Common myeloid progenitor, CD34-positive (primary cell): ENCODE measurements at regions of chr1 and their contacts with region 1.

Region 1: GRCh38 chr1:204989266-204990058 is 53.5 kb upstream of the CNTN2 start:
- DNase-seq: peak; percentile 80 to 90 (median 87)
- H3K4me3 ChIP-seq: no peak overlapping the region
- H3K27ac ChIP-seq: no peak overlapping the region
- H3K4me1 ChIP-seq: peaks cover 11 to 46% (median 35%) of the 10 kb centered on the region in 4 experiments
- H3K27me3 ChIP-seq: no peaks in the 10 kb centered on the region

Region 2: DNA sequence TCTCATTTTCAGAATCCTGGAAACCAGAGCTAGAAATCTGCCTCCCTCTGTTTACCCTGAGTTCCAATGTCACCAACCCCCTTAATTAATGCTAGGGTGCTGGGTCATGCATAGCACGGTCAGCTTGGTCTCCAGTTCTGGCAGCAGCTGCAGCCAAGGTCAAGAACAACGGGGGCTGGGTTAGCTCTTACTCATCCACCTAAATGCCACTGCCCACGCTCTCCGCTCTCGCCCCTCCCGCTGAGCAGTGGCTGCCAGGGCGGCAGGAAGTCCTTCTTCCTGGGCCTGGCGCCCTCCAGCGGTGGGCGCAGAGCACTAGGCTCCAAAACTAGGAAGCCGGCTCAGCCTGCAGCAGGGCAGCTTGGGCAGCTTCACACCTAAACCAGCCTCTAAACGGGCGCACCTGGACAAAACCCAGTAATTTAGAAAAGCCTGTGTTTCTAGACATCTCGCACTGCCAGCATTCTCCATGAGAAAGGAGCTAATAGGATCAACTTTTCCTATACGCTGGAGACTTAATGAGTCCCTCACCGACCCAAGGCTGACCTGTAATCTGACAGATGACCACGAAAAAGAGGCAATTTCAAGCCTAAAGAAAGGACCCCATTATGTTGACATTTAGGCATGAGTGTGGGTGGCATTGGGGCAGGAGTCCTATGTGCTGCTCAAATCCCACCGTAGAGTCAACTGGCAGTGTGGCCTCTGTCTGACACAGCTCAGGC is 225.6 kb before region 1 on chr1:
- CTCF ChIA-PET with region 1: no interaction called
- POLR2A ChIA-PET with region 1: no interaction called
- DNase-seq: peak; percentile 69 to 84 (median 83)
- H3K4me3 ChIP-seq: peak overlapping the region in 2 of 7 experiments; percentile 12 to 48
- H3K27ac ChIP-seq: no peak overlapping the region
- H3K4me1 ChIP-seq: peaks cover 0 to 10% (median 5%) of the 10 kb centered on the region in 4 experiments
- H3K27me3 ChIP-seq: peaks cover 0 to 23% (median 2%) of the 10 kb centered on the region in 5 experiments

Region 3: GRCh38 chr1:204975570-204976235 is 13.8 kb before region 1 on chr1:
- CTCF ChIA-PET with region 1: interaction called, 142 read pairs
- POLR2A ChIA-PET with region 1: no interaction called
- DNase-seq: peak; percentile 43 to 67 (median 53)
- H3K4me3 ChIP-seq: no peak overlapping the region
- H3K27ac ChIP-seq: no peak overlapping the region
- H3K4me1 ChIP-seq: peaks cover 6 to 49% (median 35%) of the 10 kb centered on the region in 4 experiments
- H3K27me3 ChIP-seq: no peaks in the 10 kb centered on the region

Region 4: GRCh38 chr1:205054013-205054412 is 64.6 kb after region 1 on chr1:
- CTCF ChIA-PET with region 1: interaction called, 17 read pairs
- POLR2A ChIA-PET with region 1: no interaction called
- DNase-seq: no peak
- H3K4me3 ChIP-seq: no peak overlapping the region
- H3K27ac ChIP-seq: no peak overlapping the region
- H3K4me1 ChIP-seq: no peaks in the 10 kb centered on the region
- H3K27me3 ChIP-seq: peaks cover 0 to 7% (median 0%) of the 10 kb centered on the region in 5 experiments

Region 5: GRCh38 chr1:205121660-205122488 is 132.4 kb after region 1 on chr1 and contains the start of gene RBBP5:
- CTCF ChIA-PET with region 1: interaction called, 13 read pairs
- POLR2A ChIA-PET with region 1: no interaction called
- DNase-seq: peak; percentile 98 to 99 (median 98)
- H3K4me3 ChIP-seq: peak within 1 kb of the TSS; percentile 80 to 100 (median 97)
- H3K27ac ChIP-seq: peak within 1 kb of the TSS; percentile 99 to 100
- H3K4me1 ChIP-seq: peaks cover 10 to 42% (median 32%) of the 10 kb centered on the region in 4 experiments
- H3K27me3 ChIP-seq: no peaks in the 10 kb centered on the region

Region 6: DNA sequence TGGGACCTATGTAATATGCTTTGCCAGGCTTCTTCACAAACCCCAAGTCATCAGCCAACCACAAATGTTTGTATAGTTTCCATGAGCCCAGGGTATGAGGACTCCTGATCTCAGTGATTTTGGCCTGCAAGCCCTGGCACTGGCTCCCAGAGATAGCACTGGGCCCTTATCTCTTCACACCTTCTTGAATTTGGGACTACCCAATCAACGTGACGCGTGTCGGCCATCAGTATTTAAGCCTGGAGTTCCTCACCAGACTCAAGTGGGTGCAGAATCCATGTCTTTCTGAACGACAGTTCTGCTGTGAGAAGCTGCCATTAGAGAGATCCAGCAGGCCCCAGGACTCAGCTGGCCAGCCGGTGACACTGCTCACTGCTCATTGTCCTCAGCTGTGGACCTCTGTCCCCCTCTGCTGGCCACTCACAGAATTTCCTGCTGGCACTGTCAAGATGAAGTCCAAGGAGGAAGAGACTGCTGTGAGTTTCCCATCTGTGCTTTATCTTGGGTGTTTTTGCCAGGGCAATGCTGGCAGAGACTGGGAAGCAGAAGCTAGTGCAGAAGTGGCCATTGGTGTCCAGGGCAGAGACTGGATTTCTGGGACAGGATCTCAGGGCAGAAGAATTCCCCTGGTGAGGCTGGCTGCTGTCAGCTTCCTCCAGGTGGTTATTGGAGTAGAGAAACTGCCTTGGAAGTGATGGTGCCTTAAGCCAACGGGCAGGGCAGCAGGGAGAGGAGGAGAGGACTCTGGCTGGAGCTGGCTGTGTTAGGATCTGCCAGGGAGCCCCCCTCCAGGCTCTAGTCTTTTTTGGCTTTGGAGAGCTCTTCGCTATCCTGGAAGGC is 266.7 kb after region 1 on chr1:
- CTCF ChIA-PET with region 1: interaction called, 38 read pairs
- POLR2A ChIA-PET with region 1: no interaction called
- DNase-seq: peak; percentile 83 to 94 (median 93)
- H3K4me3 ChIP-seq: no peak overlapping the region
- H3K27ac ChIP-seq: peak overlapping the region in 1 of 2 experiments; percentile 46
- H3K4me1 ChIP-seq: peaks cover 0 to 19% (median 3%) of the 10 kb centered on the region in 4 experiments
- H3K27me3 ChIP-seq: peaks cover 0 to 12% (median 4%) of the 10 kb centered on the region in 5 experiments